Stomach (tissue), 19 donors: ENCODE measurements at regions of chr6 and their contacts with region 1.

Region 1: GRCh38 chr6:144202879-144203468 is 52.7 kb downstream of the STX11 start:
- DNase-seq: no peak
- H3K4me3 ChIP-seq: no peak overlapping the region
- H3K27ac ChIP-seq: no peak overlapping the region
- H3K4me1 ChIP-seq: no peaks in the 10 kb centered on the region
- H3K27me3 ChIP-seq: no peaks in the 10 kb centered on the region
- CTCF ChIP-seq: no peak
- EP300 ChIP-seq: no peak
- POLR2A ChIP-seq: no peak

Region 2: GRCh38 chr6:144119376-144119775 is 83.6 kb before region 1 on chr6:
- intact Hi-C with region 1: loop called (anchors 10 kb)
- DNase-seq: no peak
- H3K4me3 ChIP-seq: no peak overlapping the region
- H3K27ac ChIP-seq: no peak overlapping the region
- H3K4me1 ChIP-seq: no peaks in the 10 kb centered on the region
- H3K27me3 ChIP-seq: no peaks in the 10 kb centered on the region
- CTCF ChIP-seq: no peak
- EP300 ChIP-seq: no peak
- POLR2A ChIP-seq: no peak

Region 3: GRCh38 chr6:144284783-144285547 is 82.0 kb after region 1 on chr6 and contains the start of gene UTRN:
- intact Hi-C with region 1: no loop called
- DNase-seq: peak; percentile 75 to 93
- H3K4me3 ChIP-seq: peak within 1 kb of the TSS; percentile 73 to 91 (median 81)
- H3K27ac ChIP-seq: peak within 1 kb of the TSS; percentile 87 to 98 (median 96)
- H3K4me1 ChIP-seq: peaks cover 8 to 27% (median 18%) of the 10 kb centered on the region in 4 donors
- H3K27me3 ChIP-seq: no peaks in the 10 kb centered on the region
- CTCF ChIP-seq: no peak
- EP300 ChIP-seq: no peak
- POLR2A ChIP-seq: no peak
- total RNA-seq, gene UTRN: 60.3 to 218 (median 190) TPM